ENCODE measurements at regions of chr4 and their contacts with region 1.

Region 1: GRCh38 chr4:13892739-13893105 is 265.2 kb upstream of the BOD1L1 start:
- DNase-seq: no peak
- CTCF ChIP-seq: no peak

Region 2: GRCh38 chr4:13907255-13907751 is 14.6 kb after region 1 on chr4:
- CTCF ChIA-PET with region 1: interaction called, 11 read pairs
- POLR2A ChIA-PET with region 1: no interaction called
- DNase-seq: no peak
- CTCF ChIP-seq: no peak

Region 3: GRCh38 chr4:14277505-14277904 is 384.8 kb after region 1 on chr4:
- CTCF ChIA-PET with region 1: no interaction called
- POLR2A ChIA-PET with region 1: no interaction called
- DNase-seq: no peak
- CTCF ChIP-seq: no peak

Measured in GM10248 (cell line).